ENCODE measurements at regions of chr3 and their contacts with region 1.

Region 1: DNA sequence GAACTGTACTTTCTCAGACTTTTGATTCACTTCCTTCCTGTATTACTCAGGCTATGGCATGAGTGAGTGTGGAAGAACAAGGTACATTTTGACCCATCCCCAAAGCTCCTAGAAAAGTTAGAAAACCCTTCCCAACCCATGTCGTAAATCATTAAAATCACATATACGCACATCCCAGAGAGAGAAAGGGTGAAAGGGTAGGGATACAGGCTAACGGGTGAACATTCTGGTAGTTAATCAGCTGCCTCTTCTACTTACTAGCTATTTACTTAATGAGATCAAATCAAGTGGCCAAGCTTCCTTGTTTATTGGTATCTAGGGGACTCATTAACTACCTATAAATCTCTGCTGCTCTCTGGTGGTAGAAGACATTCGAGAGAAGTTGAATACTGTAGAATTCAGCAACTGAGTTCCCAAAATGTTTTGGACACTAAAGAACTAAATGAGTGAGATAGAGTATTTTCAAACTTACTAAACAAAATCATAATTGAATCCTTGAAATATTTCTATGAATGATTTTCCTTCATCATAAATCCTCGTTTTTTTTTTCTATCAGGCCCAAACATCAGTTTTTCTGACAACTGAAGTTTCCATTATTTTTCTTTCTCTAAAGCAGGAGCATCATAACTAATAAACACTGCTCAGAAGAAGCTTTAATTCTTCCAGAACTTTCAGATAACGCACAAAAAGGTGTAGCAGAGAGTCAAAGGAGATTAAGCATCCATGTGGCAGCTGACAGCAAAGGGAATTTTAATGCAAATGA is 124.2 kb downstream of the IMPG2 start:
- DNase-seq: no peak
- ATAC-seq: peak; percentile 80

Region 2: GRCh38 chr3:99833617-99834205 is 1362.4 kb before region 1 on chr3:
- intact Hi-C with region 1: loop called (anchors 5 kb)
- DNase-seq: no peak
- ATAC-seq: peak; percentile 32

Region 3: DNA sequence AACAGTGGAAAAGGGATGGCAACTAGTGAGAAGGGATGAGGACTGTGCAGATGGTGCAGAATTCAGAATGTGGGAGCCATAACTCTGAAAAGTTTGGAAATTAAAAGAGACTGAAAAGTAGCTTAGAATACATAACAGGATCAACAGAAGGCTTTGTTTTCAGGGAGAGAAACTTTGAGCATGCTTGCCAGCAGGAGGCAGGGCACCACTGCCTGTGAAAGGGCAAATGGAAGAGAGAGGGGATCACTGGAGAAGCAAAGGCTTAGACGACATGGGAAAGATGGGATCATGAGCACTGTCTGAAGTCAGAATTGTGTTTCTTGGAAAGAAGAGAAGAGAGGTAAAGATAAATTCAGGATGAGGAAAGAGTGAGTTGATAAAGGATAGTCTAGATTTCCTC is 302.5 kb before region 1 on chr3:
- intact Hi-C with region 1: loop called (anchors 2 kb)
- DNase-seq: no peak
- ATAC-seq: no peak